H1 (cell line): ENCODE measurements at regions of chr6 and their contacts with region 1.

Region 1: DNA sequence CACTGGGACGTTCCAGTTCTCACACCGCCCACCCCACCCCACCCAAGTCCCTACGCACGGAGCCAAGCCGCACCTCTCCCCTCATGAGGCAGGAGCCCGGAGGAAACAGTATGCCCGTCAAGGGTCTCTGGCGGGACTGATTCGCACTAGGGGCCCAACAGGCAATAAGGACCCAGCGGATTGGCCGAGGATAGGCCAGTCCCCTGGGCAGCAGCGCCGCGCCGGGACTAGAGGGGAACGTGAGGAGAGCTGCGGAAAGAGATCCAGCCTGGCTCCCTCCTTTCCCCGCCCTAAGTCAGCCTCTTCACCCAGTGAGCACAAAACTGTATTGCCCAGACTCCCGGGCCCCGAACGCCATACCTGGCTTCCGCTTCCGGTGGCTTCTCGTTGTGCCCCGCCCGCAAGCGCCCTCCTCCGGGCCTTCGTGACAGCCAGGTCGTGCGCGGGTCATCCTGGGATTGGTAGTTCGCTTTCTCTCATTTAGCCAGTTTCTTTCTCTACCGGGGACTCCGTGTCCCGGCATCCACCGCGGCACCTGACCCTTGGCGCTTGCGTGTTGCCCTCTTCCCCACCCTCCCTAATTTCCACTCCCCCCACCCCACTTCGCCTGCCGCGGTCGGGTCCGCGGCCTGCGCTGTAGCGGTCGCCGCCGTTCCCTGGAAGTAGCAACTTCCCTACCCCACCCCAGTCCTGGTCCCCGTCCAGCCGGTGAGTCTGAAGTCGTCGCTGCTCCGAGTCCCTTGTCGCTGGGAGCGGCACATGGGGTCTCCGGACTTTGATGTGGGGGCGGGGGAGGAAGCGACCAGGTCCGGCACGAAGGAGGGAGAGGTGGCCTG is at the start of gene CSNK2B:
- DNase-seq: peak; percentile 88 to 91
- H3K4me3 ChIP-seq: peak within 1 kb of the TSS; percentile 88 to 94 (median 91)
- H3K27ac ChIP-seq: peak within 1 kb of the TSS; percentile 97
- H3K4me1 ChIP-seq: peaks cover 0 to 12% (median 4%) of the 10 kb centered on the region in 4 experiments; a peak in 5 of 7 replicates
- H3K27me3 ChIP-seq: no peaks in the 10 kb centered on the region
- CTCF ChIP-seq: no peak
- EP300 ChIP-seq: no peak
- POLR2A ChIP-seq: peak in 1 of 2 experiments; percentile 95; a peak in 2 of 3 replicates
- RAD21 ChIP-seq: no peak
- total RNA-seq, gene CSNK2B: 192 and 208 TPM in 2 replicates

Region 2: GRCh38 chr6:30981942-30982772 is 683.6 kb before region 1 on chr6:
- CTCF ChIA-PET with region 1: no interaction called
- POLR2A ChIA-PET with region 1: no interaction called
- DNase-seq: peak in 1 of 2 experiments; percentile 68
- H3K4me3 ChIP-seq: peak overlapping the region in 3 of 4 experiments; percentile 3 to 47 (median 6); a peak in 4 of 8 replicates
- H3K27ac ChIP-seq: no peak overlapping the region
- H3K4me1 ChIP-seq: peaks cover 0 to 2% (median 0%) of the 10 kb centered on the region in 4 experiments; a peak in 1 of 7 replicates
- H3K27me3 ChIP-seq: no peaks in the 10 kb centered on the region
- CTCF ChIP-seq: peak; percentile 39 to 80 (median 65); a peak in 3 of 4 replicates
- EP300 ChIP-seq: no peak
- POLR2A ChIP-seq: no peak
- RAD21 ChIP-seq: peak; percentile 38 to 53; a peak in 3 of 4 replicates

Region 3: DNA sequence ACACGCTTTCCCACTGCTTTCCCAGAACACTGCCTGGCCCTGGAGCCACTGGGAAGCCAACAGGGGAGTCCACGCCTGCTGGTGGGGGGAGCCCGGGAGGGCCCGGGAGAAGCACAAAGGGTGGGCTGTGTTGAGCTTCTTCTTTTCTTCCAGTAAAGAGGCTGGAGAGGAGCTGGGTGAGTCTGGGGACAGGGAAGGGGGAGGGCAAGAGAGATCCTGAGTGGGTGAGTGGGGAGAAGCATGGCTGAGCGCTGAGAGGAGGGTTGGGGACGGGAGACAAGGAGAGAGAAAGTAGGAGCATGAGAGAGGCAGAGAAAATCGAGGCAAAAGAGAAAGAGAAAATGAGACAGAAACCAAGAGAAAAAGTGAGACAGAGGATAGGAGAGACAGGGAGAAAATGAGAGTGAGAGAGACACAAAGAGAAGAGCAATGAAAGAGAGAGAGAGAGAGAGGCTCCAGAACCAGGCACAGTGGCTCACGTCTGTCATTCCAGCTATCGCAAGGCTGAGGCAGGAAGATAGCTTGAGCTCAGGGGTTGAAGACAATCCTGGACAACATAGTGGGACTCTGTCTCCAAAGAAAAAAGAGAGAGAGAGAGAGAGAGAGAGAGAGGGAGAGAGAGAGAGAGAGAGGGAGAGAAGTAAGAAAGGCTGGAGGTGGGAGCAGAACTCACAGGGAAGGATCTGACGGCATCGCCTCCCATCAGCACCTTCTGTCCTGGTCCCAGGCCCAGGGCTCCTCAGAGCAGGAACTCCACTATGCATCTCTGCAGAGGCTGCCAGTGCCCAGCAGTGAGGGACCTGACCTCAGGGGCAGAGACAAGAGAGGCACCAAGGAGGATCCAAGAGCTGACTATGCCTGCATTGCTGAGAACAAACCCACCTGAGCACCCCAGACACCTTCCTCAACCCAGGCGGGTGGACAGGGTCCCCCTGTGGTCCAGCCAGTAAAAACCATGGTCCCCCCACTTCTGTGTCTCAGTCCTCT is 77.6 kb before region 1 on chr6:
- CTCF ChIA-PET with region 1: no interaction called
- POLR2A ChIA-PET with region 1: no interaction called
- DNase-seq: no peak
- H3K4me3 ChIP-seq: no peak overlapping the region
- H3K27ac ChIP-seq: no peak overlapping the region
- H3K4me1 ChIP-seq: peaks cover 0 to 4% (median 0%) of the 10 kb centered on the region in 4 experiments; a peak in 1 of 7 replicates
- H3K27me3 ChIP-seq: no peaks in the 10 kb centered on the region
- CTCF ChIP-seq: no peak
- EP300 ChIP-seq: no peak
- POLR2A ChIP-seq: no peak
- RAD21 ChIP-seq: no peak

Region 4: GRCh38 chr6:31680840-31681671 is 15.3 kb after region 1 on chr6 and contains the start of gene LY6G5C:
- CTCF ChIA-PET with region 1: interaction called, 6 read pairs
- POLR2A ChIA-PET with region 1: interaction called, 20 read pairs
- DNase-seq: peak in 1 of 2 experiments; percentile 79
- H3K4me3 ChIP-seq: peak within 1 kb of the TSS; percentile 22 to 70 (median 60)
- H3K27ac ChIP-seq: no peak within 1 kb of the TSS
- H3K4me1 ChIP-seq: peaks cover 0 to 10% (median 7%) of the 10 kb centered on the region in 4 experiments; a peak in 5 of 7 replicates
- H3K27me3 ChIP-seq: peaks cover 3 to 13% (median 12%) of the 10 kb centered on the region in 4 experiments; a peak in 6 of 7 replicates
- CTCF ChIP-seq: peak; percentile 78 to 85 (median 83)
- EP300 ChIP-seq: no peak
- POLR2A ChIP-seq: no peak
- RAD21 ChIP-seq: peak; percentile 90 to 96
- total RNA-seq, gene LY6G5C: 1.1 and 1.2 TPM in 2 replicates